Heart right ventricle (tissue), 16 donors: ENCODE measurements at regions of chr1 and their contacts with region 1.

Region 1: GRCh38 chr1:171919891-171920887 is 78.9 kb downstream of the DNM3 start:
- DNase-seq: no peak
- ATAC-seq: no peak
- H3K4me3 ChIP-seq: no peak overlapping the region
- H3K27ac ChIP-seq: no peak overlapping the region
- H3K4me1 ChIP-seq: peaks cover 0 to 14% (median 0%) of the 10 kb centered on the region in 9 donors
- H3K27me3 ChIP-seq: no peaks in the 10 kb centered on the region
- CTCF ChIP-seq: no peak

Region 2: GRCh38 chr1:171841050-171841940 is 78.9 kb before region 1 on chr1 and contains the start of gene DNM3:
- intact Hi-C with region 1: loop called in 1 of 10 experiments (anchors 5 kb)
- DNase-seq: peak; percentile 75 to 85
- ATAC-seq: peak; percentile 96 to 99 (median 98)
- H3K4me3 ChIP-seq: peak within 1 kb of the TSS; percentile 67 to 95 (median 86)
- H3K27ac ChIP-seq: peak within 1 kb of the TSS in 9 of 10 donors; percentile 47 to 76 (median 72)
- H3K4me1 ChIP-seq: peaks cover 0 to 19% (median 15%) of the 10 kb centered on the region in 9 donors
- H3K27me3 ChIP-seq: peaks cover 0 to 29% (median 8%) of the 10 kb centered on the region in 7 donors
- CTCF ChIP-seq: no peak
- total RNA-seq, gene DNM3: 0.77 to 2.8 (median 2.2) TPM

Region 3: GRCh38 chr1:171883849-171884248 is 36.3 kb before region 1 on chr1:
- intact Hi-C with region 1: no loop called
- DNase-seq: no peak
- ATAC-seq: no peak
- H3K4me3 ChIP-seq: no peak overlapping the region
- H3K27ac ChIP-seq: no peak overlapping the region
- H3K4me1 ChIP-seq: peaks cover 0 to 3% (median 0%) of the 10 kb centered on the region in 9 donors
- H3K27me3 ChIP-seq: no peaks in the 10 kb centered on the region
- CTCF ChIP-seq: no peak